ENCODE measurements at regions of chr2 and their contacts with region 1.

Region 1: DNA sequence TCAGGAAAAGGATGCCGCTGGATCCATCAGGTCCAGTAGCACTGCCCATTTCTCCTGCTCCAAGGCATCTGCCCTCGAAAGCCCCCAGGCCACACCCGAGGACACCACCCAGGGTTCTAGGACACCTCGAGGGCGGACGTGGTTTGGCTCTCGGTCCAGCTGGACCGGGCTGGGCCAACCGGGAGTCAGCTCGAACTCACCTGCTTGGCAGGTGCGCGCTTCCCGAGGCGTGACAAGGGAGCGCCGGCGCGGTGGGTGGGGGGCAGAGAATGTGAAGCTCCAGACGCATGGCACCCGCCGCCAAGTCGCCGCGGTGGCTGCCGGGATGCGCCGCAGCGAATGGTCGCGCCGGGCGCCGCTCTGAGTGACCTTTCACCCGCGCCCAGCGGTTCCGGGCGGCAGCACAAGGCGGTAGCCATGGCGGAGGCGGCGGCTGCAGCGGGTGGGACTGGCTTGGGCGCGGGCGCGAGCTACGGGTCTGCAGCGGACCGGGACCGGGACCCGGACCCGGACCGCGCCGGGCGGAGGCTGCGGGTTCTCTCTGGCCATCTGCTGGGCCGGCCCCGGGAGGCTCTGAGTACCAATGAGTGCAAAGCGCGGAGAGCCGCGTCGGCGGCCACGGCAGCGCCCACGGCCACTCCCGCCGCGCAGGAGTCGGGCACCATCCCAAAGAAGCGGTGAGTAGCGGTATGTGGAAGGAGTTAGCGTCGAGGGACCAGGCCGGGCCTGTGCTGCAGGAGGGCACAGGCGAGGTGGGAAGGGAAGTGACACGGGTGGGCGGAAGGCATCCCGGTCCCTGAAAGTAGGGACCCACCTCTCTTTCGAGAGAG is at the start of gene AGPS:
- DNase-seq: peak; percentile 71
- H3K4me3 Mint-ChIP-seq: peak within 1 kb of the TSS; percentile 96
- H3K27ac Mint-ChIP-seq: peak within 1 kb of the TSS; percentile 97
- H3K4me1 Mint-ChIP-seq: peaks cover 48% of the 10 kb centered on the region
- H3K27me3 Mint-ChIP-seq: no peaks in the 10 kb centered on the region
- CTCF ChIP-seq: peak; percentile 14
- total RNA-seq, gene AGPS: 49.5 and 50.5 TPM in 2 replicates

Region 2: GRCh38 chr2:177405029-177405692 is 12.6 kb after region 1 on chr2:
- CTCF ChIA-PET with region 1: interaction called, 3 read pairs
- POLR2A ChIA-PET with region 1: interaction called, 34 read pairs
- intact Hi-C with region 1: no loop called
- DNase-seq: no peak
- H3K4me3 Mint-ChIP-seq: no peak overlapping the region
- H3K27ac Mint-ChIP-seq: no peak overlapping the region
- H3K4me1 Mint-ChIP-seq: peaks cover 27% of the 10 kb centered on the region
- H3K27me3 Mint-ChIP-seq: no peaks in the 10 kb centered on the region
- CTCF ChIP-seq: no peak